ENCODE measurements at regions of chr3 and their contacts with region 1.

Region 1: DNA sequence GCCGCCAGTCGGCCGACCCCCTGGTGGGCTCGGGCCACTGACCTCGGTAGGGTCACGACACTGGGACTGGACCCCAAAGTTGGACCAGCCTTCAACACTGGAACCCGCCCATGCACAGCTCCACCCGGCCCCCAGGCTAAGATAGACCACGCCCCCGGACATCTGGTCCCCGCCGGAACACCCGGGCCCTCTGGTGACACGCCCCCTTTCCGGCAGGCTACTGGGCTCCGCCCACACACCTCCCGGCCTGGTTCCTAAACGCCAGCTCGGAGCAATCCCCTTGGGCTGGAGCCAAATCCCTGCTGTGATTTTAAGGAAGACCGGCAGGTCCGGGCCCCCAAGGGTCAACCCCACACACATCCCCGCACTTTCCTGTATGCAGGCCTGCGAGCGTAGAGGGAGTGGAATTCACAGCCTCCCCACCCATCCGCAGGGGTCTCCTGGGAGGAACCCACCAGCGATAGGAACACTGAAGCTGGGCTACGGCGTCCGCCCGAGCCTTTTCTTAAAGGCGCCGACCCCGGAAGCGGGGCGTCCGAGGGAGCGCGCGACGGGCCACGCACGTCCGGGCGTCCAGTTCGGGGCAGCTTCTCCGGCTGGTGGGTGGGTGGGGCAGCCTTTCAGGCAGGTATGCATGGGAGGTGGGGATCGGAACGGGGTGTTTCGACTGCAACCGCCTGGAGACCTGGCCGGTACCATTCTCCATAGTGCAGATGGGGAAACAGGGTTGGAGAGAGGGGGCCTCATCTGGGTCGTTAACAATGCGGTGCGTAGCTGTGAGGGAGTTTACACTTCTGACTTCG is at the start of gene HEMK1:
- DNase-seq: peak; percentile 98
- ATAC-seq: peak; percentile 33
- H3K4me3 Mint-ChIP-seq: peak within 1 kb of the TSS; percentile 100
- H3K27ac Mint-ChIP-seq: peak within 1 kb of the TSS; percentile 99
- H3K4me1 Mint-ChIP-seq: peaks cover 59% of the 10 kb centered on the region
- H3K27me3 Mint-ChIP-seq: no peaks in the 10 kb centered on the region
- total RNA-seq, gene HEMK1: 61.6 to 77.7 TPM

Region 2: GRCh38 chr3:50337191-50337841 is 231.8 kb before region 1 on chr3:
- CTCF ChIA-PET with region 1: no interaction called
- POLR2A ChIA-PET with region 1: interaction called, 6 read pairs
- intact Hi-C with region 1: loop called in 1 of 2 experiments (anchors 1 kb)
- DNase-seq: peak; percentile 99
- ATAC-seq: peak; percentile 82
- H3K4me3 Mint-ChIP-seq: peak overlapping the region; percentile 83
- H3K27ac Mint-ChIP-seq: peak overlapping the region; percentile 91
- H3K4me1 Mint-ChIP-seq: peaks cover 50% of the 10 kb centered on the region
- H3K27me3 Mint-ChIP-seq: no peaks in the 10 kb centered on the region

Region 3: GRCh38 chr3:50365080-50365841 is 203.9 kb before region 1 on chr3:
- CTCF ChIA-PET with region 1: no interaction called
- POLR2A ChIA-PET with region 1: no interaction called
- intact Hi-C with region 1: loop called in 1 of 2 experiments (anchors 1 kb)
- DNase-seq: peak; percentile 98
- ATAC-seq: peak; percentile 99
- H3K4me3 Mint-ChIP-seq: peak overlapping the region; percentile 72
- H3K27ac Mint-ChIP-seq: peak overlapping the region; percentile 74
- H3K4me1 Mint-ChIP-seq: peaks cover 13% of the 10 kb centered on the region
- H3K27me3 Mint-ChIP-seq: no peaks in the 10 kb centered on the region

Region 4: GRCh38 chr3:50600841-50601591 is 31.9 kb after region 1 on chr3:
- CTCF ChIA-PET with region 1: interaction called, 647 read pairs
- POLR2A ChIA-PET with region 1: interaction called, 213 read pairs
- intact Hi-C with region 1: loop called (anchors 1 kb)
- DNase-seq: peak; percentile 96
- ATAC-seq: peak; percentile 55
- H3K4me3 Mint-ChIP-seq: peak overlapping the region; percentile 96
- H3K27ac Mint-ChIP-seq: peak overlapping the region; percentile 100
- H3K4me1 Mint-ChIP-seq: peaks cover 83% of the 10 kb centered on the region
- H3K27me3 Mint-ChIP-seq: no peaks in the 10 kb centered on the region

Region 5: GRCh38 chr3:50971487-50971924 is 402.4 kb after region 1 on chr3:
- CTCF ChIA-PET with region 1: no interaction called
- POLR2A ChIA-PET with region 1: no interaction called
- intact Hi-C with region 1: loop called in 1 of 2 experiments (anchors 5 kb)
- DNase-seq: peak; percentile 66
- ATAC-seq: peak; percentile 85
- H3K4me3 Mint-ChIP-seq: no peak overlapping the region
- H3K27ac Mint-ChIP-seq: no peak overlapping the region
- H3K4me1 Mint-ChIP-seq: peaks cover 19% of the 10 kb centered on the region
- H3K27me3 Mint-ChIP-seq: peaks cover 2% of the 10 kb centered on the region

Measured in activated CD4-positive, alpha-beta T cell treated with anti-CD3 and anti-CD28 coated beads for 36 hours (primary cell).